Colonic mucosa (tissue), 4 donors: ENCODE measurements at regions of chr12 and their contacts with region 1.

Region 1: DNA sequence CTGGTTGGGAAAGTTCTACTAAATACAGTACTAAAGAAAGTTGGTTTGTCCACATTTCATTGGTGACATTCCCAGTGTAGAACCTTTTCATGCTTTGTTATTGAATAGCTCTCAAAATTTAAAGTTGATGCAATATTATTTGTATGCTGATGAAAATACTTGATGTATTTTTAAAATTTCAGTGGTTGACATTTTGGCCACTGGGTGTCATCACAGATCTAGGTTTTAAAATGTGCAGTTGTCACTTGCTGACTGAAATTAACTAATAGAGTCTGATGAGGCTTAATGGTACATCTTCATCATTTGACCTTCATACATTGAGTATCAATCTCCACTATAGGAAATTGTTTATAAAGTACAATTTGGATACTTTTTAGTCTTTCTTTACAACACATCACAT is 37.1 kb downstream of the CMAS start:
- DNase-seq: no peak
- H3K4me3 ChIP-seq: no peak overlapping the region
- H3K27ac ChIP-seq: no peak overlapping the region
- H3K4me1 ChIP-seq: no peaks in the 10 kb centered on the region
- H3K27me3 ChIP-seq: no peaks in the 10 kb centered on the region
- CTCF ChIP-seq: peak; percentile 13

Region 2: GRCh38 chr12:21843795-21844194 is 239.4 kb before region 1 on chr12:
- intact Hi-C with region 1: no loop called
- DNase-seq: no peak
- H3K4me3 ChIP-seq: no peak overlapping the region
- H3K27ac ChIP-seq: no peak overlapping the region
- H3K4me1 ChIP-seq: no peaks in the 10 kb centered on the region
- H3K27me3 ChIP-seq: no peaks in the 10 kb centered on the region
- CTCF ChIP-seq: no peak

Region 3: DNA sequence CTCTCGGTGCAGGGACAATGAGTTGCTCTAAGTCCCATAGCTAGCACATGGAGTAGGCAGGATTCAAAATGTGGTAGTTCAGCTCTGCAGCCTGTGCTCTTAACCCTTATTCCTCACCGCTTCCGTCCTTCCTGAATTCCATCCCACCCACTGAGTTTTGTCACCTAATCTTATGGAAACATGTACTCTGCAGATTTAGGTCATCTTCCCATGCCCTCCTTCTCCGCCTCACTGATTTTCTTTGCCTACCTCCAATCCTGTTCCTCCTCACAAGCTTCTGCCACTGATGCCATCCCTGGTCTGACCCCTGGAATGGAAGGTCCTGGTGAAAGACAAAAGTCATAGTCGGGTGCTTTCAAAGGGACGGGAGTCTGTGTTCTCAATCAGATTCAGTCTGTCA is 95.4 kb before region 1 on chr12:
- intact Hi-C with region 1: no loop called
- DNase-seq: no peak
- H3K4me3 ChIP-seq: no peak overlapping the region
- H3K27ac ChIP-seq: no peak overlapping the region
- H3K4me1 ChIP-seq: peaks cover 4% of the 10 kb centered on the region
- H3K27me3 ChIP-seq: no peaks in the 10 kb centered on the region
- CTCF ChIP-seq: no peak

Region 4: GRCh38 chr12:21998782-21999181 is 84.4 kb before region 1 on chr12:
- intact Hi-C with region 1: no loop called
- DNase-seq: no peak
- H3K4me3 ChIP-seq: no peak overlapping the region
- H3K27ac ChIP-seq: no peak overlapping the region
- H3K4me1 ChIP-seq: no peaks in the 10 kb centered on the region
- H3K27me3 ChIP-seq: no peaks in the 10 kb centered on the region
- CTCF ChIP-seq: no peak

Region 5: DNA sequence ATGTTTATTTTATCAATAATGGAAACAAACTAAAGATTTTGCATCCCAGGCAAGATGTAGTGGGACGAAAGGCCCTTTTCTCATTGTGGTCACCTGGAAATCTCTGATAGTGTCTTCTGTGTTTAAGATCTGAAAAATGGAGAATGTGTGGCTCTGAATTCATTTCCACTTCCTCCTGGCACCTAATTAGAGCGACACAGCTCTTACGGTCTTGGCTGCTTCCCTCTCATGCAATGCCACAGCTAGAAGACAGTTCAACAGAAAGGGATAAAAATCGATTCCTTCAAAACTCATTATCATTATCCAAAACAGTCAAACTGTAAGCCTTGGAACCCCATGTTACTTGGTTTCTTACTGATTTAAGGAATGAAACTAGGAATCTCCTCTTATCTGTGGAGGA is 242.1 kb after region 1 on chr12:
- intact Hi-C with region 1: no loop called
- DNase-seq: no peak
- H3K4me3 ChIP-seq: no peak overlapping the region
- H3K27ac ChIP-seq: no peak overlapping the region
- H3K4me1 ChIP-seq: no peaks in the 10 kb centered on the region
- H3K27me3 ChIP-seq: no peaks in the 10 kb centered on the region
- CTCF ChIP-seq: no peak

Region 6: DNA sequence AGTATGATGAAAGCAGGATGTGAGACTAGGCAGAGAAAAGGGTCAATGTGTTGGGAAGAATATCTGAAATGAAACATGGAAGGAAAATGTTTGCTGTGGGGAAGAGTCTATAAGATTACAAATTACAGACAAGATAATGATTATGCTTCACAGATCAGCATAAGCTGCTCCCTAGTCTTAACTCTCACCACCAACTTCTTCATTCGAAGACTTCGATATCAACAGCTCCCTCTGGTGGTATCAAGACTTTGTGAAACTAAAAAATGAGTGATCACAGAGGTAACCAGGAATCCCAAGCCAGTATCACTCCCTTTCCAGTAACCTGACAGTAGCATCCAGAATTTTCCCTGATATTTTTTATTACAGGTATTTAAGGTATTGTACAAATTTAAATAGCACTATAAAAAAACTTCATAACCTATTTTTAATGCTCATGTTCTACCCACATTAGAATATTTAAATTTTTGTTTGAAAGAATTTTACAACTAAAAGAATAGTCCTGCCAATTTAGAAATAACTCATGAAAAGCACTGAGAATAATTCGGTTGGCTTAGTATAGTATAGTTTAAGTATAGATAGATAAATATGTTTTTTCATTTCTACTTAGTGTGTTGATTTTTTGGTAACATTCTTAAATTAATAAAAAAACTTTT is 376.8 kb after region 1 on chr12:
- intact Hi-C with region 1: loop called (anchors 5 kb)
- DNase-seq: no peak
- H3K4me3 ChIP-seq: no peak overlapping the region
- H3K27ac ChIP-seq: no peak overlapping the region
- H3K4me1 ChIP-seq: no peaks in the 10 kb centered on the region
- H3K27me3 ChIP-seq: no peaks in the 10 kb centered on the region
- CTCF ChIP-seq: peak; percentile 56